ENCODE measurements at regions of chr4 and their contacts with region 1.

Region 1: GRCh38 chr4:99414389-99414788 is 20.8 kb downstream of the ADH7 start:
- DNase-seq: no peak
- ATAC-seq: no peak
- H3K4me3 ChIP-seq: no peak overlapping the region
- H3K27ac ChIP-seq: no peak overlapping the region
- H3K4me1 ChIP-seq: no peaks in the 10 kb centered on the region
- H3K27me3 ChIP-seq: no peaks in the 10 kb centered on the region
- CTCF ChIP-seq: no peak

Region 2: DNA sequence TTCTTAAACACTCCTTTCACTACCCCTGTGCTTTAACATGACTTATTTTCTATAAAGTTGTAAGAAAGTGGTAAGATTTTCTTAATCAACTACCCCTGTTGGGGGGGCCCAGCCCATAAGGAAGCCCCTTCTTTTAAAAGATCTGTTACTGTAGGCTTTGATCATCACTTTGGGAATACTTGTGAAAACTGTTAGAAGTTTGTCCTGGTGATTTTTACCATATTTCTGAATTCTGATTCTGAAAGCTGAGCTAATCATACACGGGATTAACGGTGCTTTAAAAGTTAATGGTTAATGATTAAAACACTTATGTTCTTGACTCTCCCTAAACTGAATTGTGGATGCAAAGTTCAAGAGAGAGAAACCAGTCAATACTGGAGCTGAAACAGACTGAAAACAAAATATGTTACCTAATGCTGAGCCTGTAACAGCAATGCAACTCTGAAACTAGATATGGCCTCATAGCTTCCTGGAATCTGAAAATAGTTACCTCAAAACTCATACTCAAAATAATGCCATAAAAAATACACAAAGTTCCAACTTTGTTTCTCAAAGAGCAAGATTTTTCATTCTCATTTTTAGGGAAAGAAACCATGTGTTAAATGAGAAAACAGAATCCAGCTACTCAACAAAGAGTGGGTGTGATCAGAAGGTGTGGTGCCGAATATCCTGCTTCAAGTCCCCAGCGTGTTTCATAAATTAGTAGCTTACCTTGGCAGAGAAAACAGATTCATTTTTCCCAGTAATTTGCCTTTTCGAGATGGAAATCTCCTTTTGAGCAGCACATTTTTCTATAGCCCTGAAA is 10.8 kb before region 1 on chr4:
- CTCF ChIA-PET with region 1: no interaction called
- POLR2A ChIA-PET with region 1: no interaction called
- in situ Hi-C with region 1: no loop called
- intact Hi-C with region 1: no loop called
- DNase-seq: no peak
- ATAC-seq: no peak
- H3K4me3 ChIP-seq: no peak overlapping the region
- H3K27ac ChIP-seq: no peak overlapping the region
- H3K4me1 ChIP-seq: no peaks in the 10 kb centered on the region
- H3K27me3 ChIP-seq: no peaks in the 10 kb centered on the region
- CTCF ChIP-seq: no peak

Region 3: DNA sequence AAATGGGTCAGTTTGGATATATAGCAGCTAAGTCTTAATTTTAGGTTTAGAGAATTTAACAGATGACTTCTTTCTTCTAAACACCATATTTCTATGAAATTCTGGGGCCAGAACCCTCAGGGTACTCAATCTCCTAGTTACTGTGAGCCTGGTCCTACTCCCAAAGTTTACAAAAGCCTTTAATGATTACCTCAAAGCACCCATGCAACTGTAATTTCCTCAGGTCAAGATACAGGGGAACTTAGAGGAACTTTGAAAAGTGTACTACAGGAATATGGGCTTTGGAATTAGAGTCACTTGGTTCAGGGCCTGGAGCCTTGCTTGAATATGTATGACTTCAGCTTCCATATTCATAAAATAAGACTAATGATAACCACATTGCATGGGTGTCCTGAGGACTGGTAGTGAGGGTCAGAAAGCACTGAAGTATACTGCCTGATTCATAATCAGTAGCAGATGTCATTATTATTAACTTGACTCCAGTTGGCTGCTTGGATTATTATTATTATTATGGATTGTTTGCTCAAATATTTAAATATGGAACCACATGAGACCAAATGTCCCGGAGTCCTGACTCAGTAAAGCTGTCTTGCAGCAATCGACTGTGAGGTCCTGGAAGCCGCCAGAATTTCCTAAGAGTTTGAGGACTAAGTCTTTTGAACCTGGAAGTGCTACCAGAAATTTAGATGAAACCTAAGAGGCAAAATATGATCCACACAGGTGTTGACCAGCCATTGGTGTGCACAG is 22.8 kb after region 1 on chr4:
- CTCF ChIA-PET with region 1: no interaction called
- POLR2A ChIA-PET with region 1: no interaction called
- in situ Hi-C with region 1: no loop called
- intact Hi-C with region 1: no loop called
- DNase-seq: no peak
- ATAC-seq: no peak
- H3K4me3 ChIP-seq: no peak overlapping the region
- H3K27ac ChIP-seq: no peak overlapping the region
- H3K4me1 ChIP-seq: no peaks in the 10 kb centered on the region
- H3K27me3 ChIP-seq: no peaks in the 10 kb centered on the region
- CTCF ChIP-seq: no peak

Region 4: GRCh38 chr4:99462875-99463464 is 48.6 kb after region 1 on chr4:
- CTCF ChIA-PET with region 1: no interaction called
- POLR2A ChIA-PET with region 1: no interaction called
- in situ Hi-C with region 1: no loop called
- intact Hi-C with region 1: loop called (anchors 5 kb)
- DNase-seq: peak; percentile 25
- ATAC-seq: peak; percentile 77
- H3K4me3 ChIP-seq: no peak overlapping the region
- H3K27ac ChIP-seq: no peak overlapping the region
- H3K4me1 ChIP-seq: no peaks in the 10 kb centered on the region
- H3K27me3 ChIP-seq: no peaks in the 10 kb centered on the region; the same call in 1 of the 2 replicates
- CTCF ChIP-seq: peak; percentile 76

Region 5: GRCh38 chr4:99552872-99553271 is 138.5 kb after region 1 on chr4:
- CTCF ChIA-PET with region 1: no interaction called
- POLR2A ChIA-PET with region 1: no interaction called
- in situ Hi-C with region 1: no loop called
- intact Hi-C with region 1: no loop called
- DNase-seq: no peak
- ATAC-seq: no peak
- H3K4me3 ChIP-seq: no peak overlapping the region
- H3K27ac ChIP-seq: no peak overlapping the region
- H3K4me1 ChIP-seq: no peaks in the 10 kb centered on the region
- H3K27me3 ChIP-seq: no peaks in the 10 kb centered on the region
- CTCF ChIP-seq: no peak